Mammary epithelial cell (primary cell): ENCODE measurements at regions of chr3 and their contacts with region 1.

Region 1: DNA sequence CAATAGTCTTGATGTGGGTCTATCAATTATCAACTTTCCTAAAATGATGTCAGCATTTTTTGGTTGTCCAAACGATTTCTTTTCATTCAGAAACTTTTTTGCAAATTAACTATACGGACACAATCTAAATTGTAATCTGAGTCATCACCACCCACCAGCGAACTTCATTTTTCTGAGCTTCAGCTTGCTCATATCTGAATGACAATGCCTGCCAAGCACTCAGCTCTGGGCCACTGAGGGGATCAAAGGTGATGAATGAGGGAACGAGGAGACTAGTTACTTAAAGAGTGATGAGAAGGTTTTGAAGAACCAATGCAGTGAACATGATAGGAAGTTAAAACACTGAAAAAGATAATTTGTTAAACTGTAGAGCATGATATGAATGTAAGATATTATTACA is 14.9 kb upstream of the TBC1D23 start:
- DNase-seq: no peak
- H3K4me3 ChIP-seq: no peak overlapping the region
- H3K27ac ChIP-seq: no peak overlapping the region
- H3K4me1 ChIP-seq: peaks cover 3% of the 10 kb centered on the region
- H3K27me3 ChIP-seq: no peaks in the 10 kb centered on the region
- CTCF ChIP-seq: no peak

Region 2: GRCh38 chr3:100073899-100074307 is 172.0 kb before region 1 on chr3:
- CTCF ChIA-PET with region 1: no interaction called
- dilution Hi-C with region 1: no loop called
- in situ Hi-C with region 1: loop called in 1 of 2 experiments (anchors 10 kb)
- intact Hi-C with region 1: no loop called
- DNase-seq: no peak
- H3K4me3 ChIP-seq: no peak overlapping the region
- H3K27ac ChIP-seq: no peak overlapping the region
- H3K4me1 ChIP-seq: no peaks in the 10 kb centered on the region
- H3K27me3 ChIP-seq: no peaks in the 10 kb centered on the region
- CTCF ChIP-seq: no peak

Region 3: DNA sequence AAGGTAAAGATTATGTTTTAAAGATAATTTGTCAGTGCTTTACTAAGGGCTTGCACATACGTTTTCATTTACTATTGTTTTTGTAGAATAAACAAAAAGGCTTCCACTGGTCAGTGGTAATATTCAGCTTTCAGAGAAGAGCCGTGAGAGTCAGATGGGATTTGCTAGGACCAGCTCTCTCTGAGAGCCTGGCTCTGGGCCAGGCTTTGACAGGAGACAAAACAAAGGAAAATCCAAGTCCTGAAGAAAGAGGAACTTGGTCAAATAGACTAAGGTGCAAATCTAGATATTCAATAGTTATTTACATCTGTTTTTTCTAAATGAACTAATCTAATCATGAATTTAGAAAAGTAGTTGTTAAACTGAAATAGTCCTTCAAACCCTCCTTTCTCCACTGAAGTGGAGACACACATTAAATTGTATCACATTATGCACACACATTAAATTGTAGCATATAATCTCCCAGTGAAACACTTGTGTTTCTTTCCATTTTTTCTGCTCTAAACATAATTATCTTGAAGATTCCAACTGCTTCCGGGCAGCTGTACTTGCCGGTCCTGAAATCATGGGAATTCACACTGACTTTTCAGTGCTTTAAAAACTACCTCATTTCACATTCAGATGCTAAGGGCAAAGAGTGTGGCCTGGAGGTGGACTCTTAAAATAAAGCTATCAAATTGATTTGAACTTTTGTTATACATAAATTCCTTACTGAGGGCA is 76.6 kb before region 1 on chr3:
- CTCF ChIA-PET with region 1: no interaction called
- dilution Hi-C with region 1: no loop called
- in situ Hi-C with region 1: no loop called
- intact Hi-C with region 1: no loop called
- DNase-seq: no peak
- H3K4me3 ChIP-seq: no peak overlapping the region
- H3K27ac ChIP-seq: no peak overlapping the region
- H3K4me1 ChIP-seq: no peaks in the 10 kb centered on the region
- H3K27me3 ChIP-seq: no peaks in the 10 kb centered on the region
- CTCF ChIP-seq: no peak